Aorta (tissue), 5 donors: ENCODE measurements at regions of chr11 and their contacts with region 1.

Region 1: GRCh38 chr11:58530236-58530635 is 22.3 kb upstream of the OR5B21 start:
- DNase-seq: no peak
- ATAC-seq: no peak
- H3K4me3 ChIP-seq: no peak overlapping the region
- H3K27ac ChIP-seq: no peak overlapping the region
- H3K4me1 ChIP-seq: no peaks in the 10 kb centered on the region
- H3K27me3 ChIP-seq: no peaks in the 10 kb centered on the region

Region 2: DNA sequence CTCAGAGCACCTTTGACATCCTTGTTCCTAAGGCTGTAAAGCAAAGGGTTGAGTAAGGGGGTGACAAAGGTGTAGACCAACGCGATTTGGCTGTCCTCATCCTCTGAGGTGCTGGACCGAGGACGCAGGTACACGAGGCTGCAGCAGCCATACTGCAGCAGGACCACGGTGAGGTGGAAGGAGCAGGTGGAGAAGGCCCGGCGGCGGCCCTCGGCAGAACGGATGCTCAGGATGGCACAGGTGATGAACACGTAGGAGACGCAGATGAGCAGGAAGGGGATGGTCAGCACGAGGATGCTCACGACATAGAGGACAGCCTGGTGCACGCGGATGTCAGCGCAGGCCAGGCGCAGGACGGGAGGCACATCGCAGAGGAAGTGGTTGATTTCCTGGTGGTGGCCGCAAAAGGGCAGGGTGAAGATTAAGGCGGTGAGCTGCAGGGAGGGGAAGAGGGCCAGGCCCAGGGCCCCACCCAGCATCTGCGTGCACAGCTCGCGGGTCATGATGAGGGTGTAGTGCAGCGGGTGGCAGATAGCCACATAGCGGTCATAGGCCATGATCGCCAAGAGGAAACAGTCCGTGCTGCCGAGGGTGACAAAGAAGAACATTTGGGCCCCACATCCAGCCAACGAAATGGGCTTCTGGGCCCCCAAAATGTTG is 302.1 kb before region 1 on chr11:
- intact Hi-C with region 1: no loop called
- DNase-seq: peak in 1 of 2 donors; percentile 64
- ATAC-seq: no peak
- H3K4me3 ChIP-seq: no peak overlapping the region
- H3K27ac ChIP-seq: no peak overlapping the region
- H3K4me1 ChIP-seq: no peaks in the 10 kb centered on the region
- H3K27me3 ChIP-seq: no peaks in the 10 kb centered on the region

Region 3: GRCh38 chr11:58805065-58805464 is 274.8 kb after region 1 on chr11:
- intact Hi-C with region 1: loop called in 1 of 2 experiments (anchors 5 kb)
- DNase-seq: no peak
- ATAC-seq: no peak
- H3K4me3 ChIP-seq: no peak overlapping the region
- H3K27ac ChIP-seq: no peak overlapping the region
- H3K4me1 ChIP-seq: no peaks in the 10 kb centered on the region
- H3K27me3 ChIP-seq: no peaks in the 10 kb centered on the region